Lower leg skin (tissue), 4 donors: ENCODE measurements at regions of chr17 and their contacts with region 1.

Region 1: GRCh38 chr17:76397687-76398487 is 13.5 kb downstream of the SPHK1 start:
- DNase-seq: peak; percentile 82 to 98
- H3K4me3 ChIP-seq: no peak overlapping the region
- CTCF ChIP-seq: peak in 1 of 3 donors; percentile 96
- POLR2A ChIP-seq: no peak

Region 2: DNA sequence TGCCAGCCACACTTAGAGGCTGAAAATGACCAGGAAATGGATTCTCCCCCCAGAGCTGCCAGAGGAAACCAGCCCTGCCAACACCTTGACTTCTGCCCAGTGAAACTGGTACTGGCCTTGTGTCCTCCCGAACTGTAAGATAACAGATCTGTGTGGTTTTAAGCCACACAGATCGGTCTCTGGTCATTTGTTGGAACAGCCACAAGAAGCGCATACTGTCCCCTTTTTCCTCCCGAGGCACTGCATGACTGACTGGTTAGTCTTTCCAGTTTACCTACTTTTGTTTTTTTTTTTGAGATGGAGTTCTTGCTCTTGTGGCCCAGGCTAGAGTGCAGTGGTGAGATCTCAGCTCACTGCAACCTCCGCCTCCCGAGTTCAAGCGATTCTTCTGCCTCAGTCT is 95.3 kb before region 1 on chr17:
- intact Hi-C with region 1: loop called (anchors 2 kb)
- DNase-seq: no peak
- H3K4me3 ChIP-seq: no peak overlapping the region
- CTCF ChIP-seq: no peak
- POLR2A ChIP-seq: no peak

Region 3: DNA sequence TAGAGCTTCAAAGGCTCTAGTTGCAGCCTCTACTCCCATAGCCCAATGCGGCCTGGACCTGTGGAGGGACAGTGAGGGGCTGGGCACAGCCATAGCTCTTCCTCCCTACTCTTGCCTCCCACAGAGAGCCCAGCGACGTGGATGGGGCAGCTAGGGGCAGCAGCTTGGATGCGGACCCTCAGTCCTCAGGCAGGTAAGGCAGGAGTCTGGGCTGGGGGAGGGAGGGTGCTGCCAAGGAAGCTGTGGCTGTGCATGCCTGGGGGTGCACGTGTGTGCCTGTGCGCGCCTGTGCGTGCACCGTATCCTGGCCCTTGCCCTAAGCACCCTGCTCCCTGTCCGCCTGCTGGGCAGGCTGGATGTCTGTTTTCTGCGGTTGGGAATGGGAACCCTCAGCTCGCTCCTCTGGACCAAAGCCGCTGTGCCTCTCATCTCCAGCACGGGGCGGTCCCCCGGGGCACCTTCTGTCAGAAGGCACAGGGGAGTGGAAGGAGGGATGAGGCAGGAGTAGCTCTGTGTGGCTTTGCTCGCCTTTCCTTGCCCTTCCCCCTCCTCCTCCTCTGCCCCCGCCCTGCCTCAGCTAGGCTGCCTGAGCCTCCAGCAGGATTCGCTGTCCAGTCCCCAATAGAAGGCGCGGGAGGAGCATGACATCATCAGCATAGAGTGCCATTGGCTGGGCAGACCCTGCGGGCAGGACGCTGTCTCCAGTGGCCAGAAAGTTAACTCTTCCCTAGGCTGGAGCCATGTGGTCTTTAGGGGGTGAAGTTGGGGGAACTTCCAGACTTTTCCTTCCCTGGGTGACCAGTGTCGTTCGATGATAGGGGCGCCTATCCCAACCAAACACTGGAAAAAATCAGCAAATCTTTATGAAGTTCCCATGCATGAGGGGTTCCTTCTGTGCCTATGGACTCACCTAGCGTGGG is 142.8 kb after region 1 on chr17:
- intact Hi-C with region 1: no loop called
- DNase-seq: peak; percentile 93 to 98
- H3K4me3 ChIP-seq: no peak overlapping the region
- CTCF ChIP-seq: no peak
- POLR2A ChIP-seq: no peak